ENCODE measurements at regions of chr10 and their contacts with region 1.

Region 1: GRCh38 chr10:31353574-31353973 is 34.6 kb downstream of the ZEB1 start:
- DNase-seq: peak; percentile 39
- ATAC-seq: peak; percentile 92
- H3K4me3 Mint-ChIP-seq: no peak overlapping the region
- H3K27ac Mint-ChIP-seq: no peak overlapping the region
- H3K4me1 Mint-ChIP-seq: peaks cover 31% of the 10 kb centered on the region
- H3K27me3 Mint-ChIP-seq: no peaks in the 10 kb centered on the region

Region 2: GRCh38 chr10:31343551-31343950 is 10.0 kb before region 1 on chr10:
- CTCF ChIA-PET with region 1: interaction called, 10 read pairs
- POLR2A ChIA-PET with region 1: interaction called, 3 read pairs
- DNase-seq: no peak
- ATAC-seq: no peak
- H3K4me3 Mint-ChIP-seq: no peak overlapping the region
- H3K27ac Mint-ChIP-seq: no peak overlapping the region
- H3K4me1 Mint-ChIP-seq: peaks cover 31% of the 10 kb centered on the region
- H3K27me3 Mint-ChIP-seq: no peaks in the 10 kb centered on the region

Measured in activated CD8-positive, alpha-beta T cell treated with anti-CD3 and anti-CD28 coated beads, Interleukin-2, amount 10 ng/mL, durations not matched to agents 7 days and 5 days (primary cell).